Mammary epithelial cell (primary cell): ENCODE measurements at regions of chr1 and their contacts with region 1.

Region 1: GRCh38 chr1:85398391-85399064 is 66.4 kb downstream of the DDAH1 start:
- DNase-seq: peak; percentile 51
- H3K4me3 ChIP-seq: no peak overlapping the region
- H3K27ac ChIP-seq: no peak overlapping the region
- H3K4me1 ChIP-seq: no peaks in the 10 kb centered on the region
- H3K27me3 ChIP-seq: no peaks in the 10 kb centered on the region
- CTCF ChIP-seq: peak; percentile 54 to 62

Region 2: GRCh38 chr1:85276215-85276977 is 122.1 kb before region 1 on chr1 and contains the start of gene BCL10:
- CTCF ChIA-PET with region 1: no interaction called
- dilution Hi-C with region 1: no loop called
- in situ Hi-C with region 1: no loop called
- intact Hi-C with region 1: loop called (anchors 1 kb)
- DNase-seq: peak; percentile 100
- H3K4me3 ChIP-seq: peak within 1 kb of the TSS; percentile 64 to 98 (median 92)
- H3K27ac ChIP-seq: peak within 1 kb of the TSS; percentile 96
- H3K4me1 ChIP-seq: peaks cover 45% of the 10 kb centered on the region
- H3K27me3 ChIP-seq: no peaks in the 10 kb centered on the region
- CTCF ChIP-seq: no peak
- total RNA-seq, gene BCL10: 27.7 to 61.5 TPM

Region 3: DNA sequence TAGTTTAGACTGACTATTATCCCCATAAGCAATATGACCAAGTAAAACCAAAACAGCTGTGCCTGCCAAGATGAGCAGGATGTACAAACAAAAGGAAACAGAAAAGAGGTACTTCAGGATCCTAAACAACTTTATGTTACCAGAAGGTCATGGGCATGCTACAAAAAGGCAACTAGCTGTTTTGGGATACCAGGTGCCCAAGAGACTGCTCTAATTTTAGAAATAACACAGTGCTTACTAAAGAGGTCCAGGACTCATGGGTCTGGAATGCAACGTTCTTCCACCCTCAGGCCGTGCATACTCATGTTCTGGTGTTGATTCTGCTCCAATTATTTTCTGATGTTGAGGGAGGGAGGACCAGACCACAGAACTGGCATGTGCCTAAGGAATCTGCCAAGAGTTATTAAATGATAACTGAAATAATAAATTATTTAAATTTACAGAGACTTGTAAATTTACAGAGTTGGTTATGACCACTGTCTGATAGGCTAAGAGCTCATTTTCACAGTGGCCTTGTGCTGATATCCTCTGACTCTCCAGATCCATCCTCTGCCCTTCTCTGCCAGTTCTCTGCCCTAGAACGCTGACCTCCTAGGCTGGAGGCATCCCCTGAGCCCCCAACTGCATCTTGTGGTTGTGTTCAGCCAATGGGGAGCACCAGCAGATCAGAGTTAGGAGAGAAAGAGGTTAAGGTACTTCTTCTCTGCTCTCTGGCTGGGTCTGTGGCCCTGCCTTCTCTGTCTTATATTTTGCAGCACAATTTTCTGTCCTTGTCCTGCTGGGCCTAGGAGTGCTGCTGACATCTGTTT is 84.4 kb before region 1 on chr1:
- CTCF ChIA-PET with region 1: no interaction called
- dilution Hi-C with region 1: no loop called
- in situ Hi-C with region 1: loop called (anchors 5 to 10 kb)
- intact Hi-C with region 1: no loop called
- DNase-seq: peak; percentile 80
- H3K4me3 ChIP-seq: no peak overlapping the region
- H3K27ac ChIP-seq: peak overlapping the region; percentile 27
- H3K4me1 ChIP-seq: peaks cover 35% of the 10 kb centered on the region
- H3K27me3 ChIP-seq: no peaks in the 10 kb centered on the region
- CTCF ChIP-seq: no peak

Region 4: DNA sequence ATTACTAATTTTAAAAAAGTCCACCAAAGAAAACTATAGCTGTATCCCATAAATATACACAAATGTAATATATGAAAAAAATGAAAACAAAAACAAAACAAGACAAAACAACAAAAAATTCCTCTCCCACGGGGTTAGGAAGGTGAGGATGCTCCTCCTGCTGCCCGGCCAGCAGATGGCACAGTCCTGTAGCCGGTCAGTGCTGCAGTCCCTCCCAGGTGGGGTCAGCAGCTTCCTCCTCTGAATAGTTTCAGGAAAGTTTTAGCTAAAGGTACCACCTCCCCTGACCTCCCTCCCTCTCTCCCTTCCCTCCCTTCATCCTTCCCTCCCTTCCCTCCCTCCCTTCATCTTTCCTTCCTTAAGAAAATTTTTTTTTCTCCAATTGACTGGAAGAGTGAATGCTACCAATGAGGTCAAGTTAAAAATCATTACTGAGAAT is 54.3 kb before region 1 on chr1:
- CTCF ChIA-PET with region 1: no interaction called
- dilution Hi-C with region 1: no loop called
- in situ Hi-C with region 1: no loop called
- intact Hi-C with region 1: loop called (anchors 1 kb)
- DNase-seq: peak; percentile 33
- H3K4me3 ChIP-seq: peak overlapping the region in 2 of 3 experiments; percentile 14 to 18
- H3K27ac ChIP-seq: peak overlapping the region; percentile 18
- H3K4me1 ChIP-seq: peaks cover 38% of the 10 kb centered on the region
- H3K27me3 ChIP-seq: no peaks in the 10 kb centered on the region
- CTCF ChIP-seq: peak; percentile 61 to 86

Region 5: GRCh38 chr1:85360730-85361493 is 37.6 kb before region 1 on chr1:
- CTCF ChIA-PET with region 1: no interaction called
- dilution Hi-C with region 1: no loop called
- in situ Hi-C with region 1: no loop called
- intact Hi-C with region 1: no loop called
- DNase-seq: peak; percentile 20
- H3K4me3 ChIP-seq: no peak overlapping the region
- H3K27ac ChIP-seq: no peak overlapping the region
- H3K4me1 ChIP-seq: no peaks in the 10 kb centered on the region
- H3K27me3 ChIP-seq: no peaks in the 10 kb centered on the region
- CTCF ChIP-seq: no peak

Region 6: GRCh38 chr1:85576642-85577418 is 178.3 kb after region 1 on chr1:
- CTCF ChIA-PET with region 1: no interaction called
- dilution Hi-C with region 1: no loop called
- in situ Hi-C with region 1: no loop called
- intact Hi-C with region 1: loop called (anchors 5 kb)
- DNase-seq: peak; percentile 62
- H3K4me3 ChIP-seq: peak overlapping the region; percentile 61 to 76 (median 64)
- H3K27ac ChIP-seq: peak overlapping the region; percentile 62
- H3K4me1 ChIP-seq: peaks cover 52% of the 10 kb centered on the region
- H3K27me3 ChIP-seq: no peaks in the 10 kb centered on the region
- CTCF ChIP-seq: peak; percentile 42 to 64

Region 7: DNA sequence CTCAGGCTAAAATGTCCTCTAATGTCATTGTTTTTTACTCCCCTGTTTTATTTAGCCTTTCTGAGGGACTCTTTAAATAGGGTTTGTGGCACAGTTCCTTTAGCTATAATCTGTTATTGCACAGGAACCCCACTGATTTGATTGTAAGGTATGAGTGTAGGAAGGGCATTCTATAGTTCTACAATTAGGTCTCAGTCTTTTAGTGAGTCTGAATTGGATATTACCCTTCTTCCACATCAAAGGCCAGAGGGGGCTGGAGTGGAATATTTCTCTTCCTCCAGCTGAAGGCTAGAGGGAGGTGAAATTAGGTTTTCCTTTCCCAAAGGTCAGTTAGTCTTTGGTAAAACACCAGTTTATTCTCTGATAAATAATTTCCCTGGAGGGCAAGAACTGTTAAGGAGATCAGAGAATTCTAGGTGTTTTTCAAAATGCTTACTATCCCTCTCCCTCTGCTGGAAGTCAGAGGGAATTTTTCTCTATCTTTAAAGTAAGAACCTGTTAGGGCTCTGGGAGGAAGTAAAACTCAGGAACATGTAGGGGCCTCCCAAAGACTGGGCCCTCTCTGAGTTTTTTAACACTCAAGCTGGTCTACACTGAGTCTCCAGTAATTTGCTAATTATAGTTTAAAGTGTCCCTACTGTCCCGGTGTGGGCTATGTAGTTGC is 486.0 kb after region 1 on chr1:
- CTCF ChIA-PET with region 1: no interaction called
- dilution Hi-C with region 1: no loop called
- in situ Hi-C with region 1: no loop called
- intact Hi-C with region 1: loop called (anchors 5 kb)
- DNase-seq: no peak
- H3K4me3 ChIP-seq: no peak overlapping the region
- H3K27ac ChIP-seq: no peak overlapping the region
- H3K4me1 ChIP-seq: no peaks in the 10 kb centered on the region
- H3K27me3 ChIP-seq: no peaks in the 10 kb centered on the region
- CTCF ChIP-seq: peak; percentile 39 to 63